Tibial artery (tissue), 4 donors: ENCODE measurements at regions of chr18 and their contacts with region 1.

Region 1: GRCh38 chr18:59484837-59485328 is 125.8 kb upstream of the LMAN1 start:
- DNase-seq: no peak
- H3K4me3 ChIP-seq: no peak overlapping the region
- H3K27ac ChIP-seq: no peak overlapping the region
- H3K4me1 ChIP-seq: peaks cover 0 to 4% (median 0%) of the 10 kb centered on the region in 4 donors
- H3K27me3 ChIP-seq: peaks cover 0 to 10% of the 10 kb centered on the region in 2 donors
- CTCF ChIP-seq: no peak

Region 2: GRCh38 chr18:57579934-57580333 is 1904.9 kb before region 1 on chr18:
- intact Hi-C with region 1: loop called (anchors 10 kb)
- DNase-seq: no peak
- H3K4me3 ChIP-seq: no peak overlapping the region
- H3K27ac ChIP-seq: no peak overlapping the region
- H3K4me1 ChIP-seq: peaks cover 0 to 4% (median 2%) of the 10 kb centered on the region in 4 donors
- H3K27me3 ChIP-seq: no peaks in the 10 kb centered on the region
- CTCF ChIP-seq: no peak

Region 3: GRCh38 chr18:59576541-59577385 is 91.9 kb after region 1 on chr18:
- intact Hi-C with region 1: no loop called
- DNase-seq: no peak
- H3K4me3 ChIP-seq: no peak overlapping the region
- H3K27ac ChIP-seq: no peak overlapping the region
- H3K4me1 ChIP-seq: no peaks in the 10 kb centered on the region
- H3K27me3 ChIP-seq: peaks cover 0 to 7% of the 10 kb centered on the region in 2 donors
- CTCF ChIP-seq: no peak